GM12878 (cell line): ENCODE measurements at regions of chr7 and their contacts with region 1.

Region 1: DNA sequence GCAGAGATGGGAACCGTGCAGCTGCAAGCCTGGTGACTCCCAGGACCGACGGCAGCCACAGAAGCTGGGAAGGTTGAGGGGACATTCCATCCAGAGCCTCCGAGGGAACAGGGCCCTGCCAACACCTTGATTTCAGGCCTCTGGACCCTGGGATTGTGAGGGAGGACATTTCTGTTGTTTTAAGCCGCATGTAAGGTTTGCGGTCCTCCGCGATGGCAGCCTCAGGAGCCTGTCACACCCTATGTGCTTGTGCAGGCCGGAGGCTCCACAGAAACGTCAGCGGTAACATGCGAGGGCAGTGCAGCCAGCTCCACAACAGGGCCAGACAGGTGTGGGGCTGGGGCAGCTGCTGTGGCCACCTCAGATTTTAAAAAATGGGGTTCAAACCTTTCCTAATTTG is 144.7 kb upstream of the SHH start:
- DNase-seq: no peak
- ATAC-seq: no peak
- H3K4me3 ChIP-seq: no peak overlapping the region
- H3K27ac ChIP-seq: no peak overlapping the region
- H3K4me1 ChIP-seq: no peaks in the 10 kb centered on the region
- H3K27me3 ChIP-seq: no peaks in the 10 kb centered on the region; a peak in 1 of 4 replicates
- CTCF ChIP-seq: no peak
- EP300 ChIP-seq: no peak
- POLR2A ChIP-seq: no peak
- RAD21 ChIP-seq: no peak

Region 2: DNA sequence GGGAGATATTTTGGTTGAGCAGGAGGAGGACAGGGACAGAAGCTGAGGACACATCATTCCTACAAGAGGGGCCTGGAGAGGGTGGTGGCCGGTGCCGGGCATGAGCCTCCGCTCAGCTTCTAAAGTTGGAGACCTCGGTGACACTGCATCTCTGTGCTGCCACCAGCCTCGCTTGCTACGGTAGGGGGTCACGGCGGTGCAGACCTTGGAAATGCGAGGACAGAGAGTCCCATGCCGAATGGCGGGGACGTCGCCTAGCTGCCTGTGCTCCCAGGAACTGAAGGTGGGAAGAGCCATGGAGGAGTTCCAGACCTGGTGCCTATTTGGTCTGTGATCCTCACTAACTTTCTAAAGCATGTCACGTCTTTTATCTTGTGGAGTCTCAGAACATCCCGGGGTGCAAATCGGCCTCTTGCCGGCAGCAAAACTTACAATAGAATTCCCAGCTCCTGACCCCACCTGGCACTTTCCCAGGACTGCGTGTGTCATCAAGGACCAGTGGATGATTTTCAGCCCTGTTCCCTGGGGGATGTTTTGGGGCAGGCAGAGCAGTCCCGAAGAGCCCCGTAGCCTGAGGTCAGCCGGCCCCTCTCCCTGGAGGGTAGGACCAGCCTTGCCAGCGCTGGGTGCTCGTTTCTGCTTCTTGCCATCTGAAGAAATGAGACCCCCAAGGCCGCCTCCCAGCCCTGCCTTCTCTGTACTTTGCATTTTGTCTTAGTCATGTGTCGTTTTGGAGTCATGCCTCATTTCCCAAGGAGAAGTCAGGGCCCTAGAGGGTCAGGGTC is 61.1 kb after region 1 on chr7:
- CTCF ChIA-PET with region 1: no interaction called
- POLR2A ChIA-PET with region 1: no interaction called
- RAD21 ChIA-PET with region 1: no interaction called
- SMC1A ChIA-PET with region 1: no interaction called
- in situ Hi-C with region 1: no loop called
- intact Hi-C with region 1: loop called (anchors 2 kb)
- DNase-seq: no peak
- ATAC-seq: no peak
- H3K4me3 ChIP-seq: no peak overlapping the region
- H3K27ac ChIP-seq: no peak overlapping the region
- H3K4me1 ChIP-seq: no peaks in the 10 kb centered on the region
- H3K27me3 ChIP-seq: no peaks in the 10 kb centered on the region
- CTCF ChIP-seq: no peak
- EP300 ChIP-seq: no peak
- POLR2A ChIP-seq: no peak
- RAD21 ChIP-seq: no peak